Naive thymus-derived CD4-positive, alpha-beta T cell (primary cell): ENCODE measurements at regions of chr14 and their contacts with region 1.

Region 1: GRCh38 chr14:69460093-69460701 is 24.3 kb upstream of the PLEKHD1 start:
- DNase-seq: peak in 8 of 9 donors; percentile 29 to 51 (median 38)
- ATAC-seq: peak; percentile 94
- H3K4me3 ChIP-seq: no peak overlapping the region
- H3K4me3 Mint-ChIP-seq: no peak overlapping the region
- H3K27ac ChIP-seq: no peak overlapping the region
- H3K27ac Mint-ChIP-seq: peak overlapping the region in 1 of 9 donors; percentile 11
- H3K4me1 ChIP-seq: no peaks in the 10 kb centered on the region
- H3K4me1 Mint-ChIP-seq: no peaks in the 10 kb centered on the region
- H3K27me3 ChIP-seq: no peaks in the 10 kb centered on the region
- H3K27me3 Mint-ChIP-seq: no peaks in the 10 kb centered on the region

Region 2: DNA sequence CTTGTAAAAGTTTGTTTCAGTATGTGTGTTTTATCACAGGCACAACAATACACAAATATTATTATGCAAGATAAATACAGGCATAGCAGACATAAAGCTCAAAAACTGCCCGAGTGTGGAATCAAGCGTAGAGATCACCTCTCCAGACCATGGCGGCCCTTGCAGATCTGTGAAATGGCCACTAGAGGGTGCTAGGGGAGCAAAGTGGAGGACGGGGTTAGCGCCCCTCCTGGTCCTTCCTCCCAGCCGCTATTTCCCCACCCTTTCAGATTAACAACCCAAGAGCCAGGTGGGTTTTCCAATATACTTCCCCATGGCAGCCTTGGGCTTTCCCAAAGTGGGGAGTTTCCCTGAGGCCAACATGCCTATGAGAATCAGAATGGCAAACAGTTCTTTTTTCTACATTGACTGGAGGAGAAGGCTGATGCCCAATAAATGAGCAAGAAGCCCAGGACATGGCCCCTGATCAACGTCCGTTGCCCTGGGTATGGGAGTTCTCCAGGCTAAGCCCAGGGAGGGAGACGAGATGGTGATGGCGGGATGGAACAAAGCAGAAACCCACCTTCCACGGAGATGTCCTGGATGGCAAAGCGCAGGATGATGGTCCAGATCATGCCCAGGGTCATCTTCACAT is 548.5 kb before region 1 on chr14:
- CTCF ChIA-PET with region 1: no interaction called
- POLR2A ChIA-PET with region 1: no interaction called
- intact Hi-C with region 1: no loop called
- DNase-seq: peak; percentile 54 to 86 (median 80)
- ATAC-seq: peak; percentile 99
- H3K4me3 ChIP-seq: no peak overlapping the region
- H3K4me3 Mint-ChIP-seq: peak overlapping the region in 1 of 10 donors; percentile 37
- H3K27ac ChIP-seq: no peak overlapping the region
- H3K27ac Mint-ChIP-seq: peak overlapping the region; percentile 51 to 90 (median 82)
- H3K4me1 ChIP-seq: peaks cover 0 to 15% of the 10 kb centered on the region in 2 donors
- H3K4me1 Mint-ChIP-seq: peaks cover 13 to 57% (median 43%) of the 10 kb centered on the region in 7 donors
- H3K27me3 ChIP-seq: no peaks in the 10 kb centered on the region
- H3K27me3 Mint-ChIP-seq: no peaks in the 10 kb centered on the region

Region 3: DNA sequence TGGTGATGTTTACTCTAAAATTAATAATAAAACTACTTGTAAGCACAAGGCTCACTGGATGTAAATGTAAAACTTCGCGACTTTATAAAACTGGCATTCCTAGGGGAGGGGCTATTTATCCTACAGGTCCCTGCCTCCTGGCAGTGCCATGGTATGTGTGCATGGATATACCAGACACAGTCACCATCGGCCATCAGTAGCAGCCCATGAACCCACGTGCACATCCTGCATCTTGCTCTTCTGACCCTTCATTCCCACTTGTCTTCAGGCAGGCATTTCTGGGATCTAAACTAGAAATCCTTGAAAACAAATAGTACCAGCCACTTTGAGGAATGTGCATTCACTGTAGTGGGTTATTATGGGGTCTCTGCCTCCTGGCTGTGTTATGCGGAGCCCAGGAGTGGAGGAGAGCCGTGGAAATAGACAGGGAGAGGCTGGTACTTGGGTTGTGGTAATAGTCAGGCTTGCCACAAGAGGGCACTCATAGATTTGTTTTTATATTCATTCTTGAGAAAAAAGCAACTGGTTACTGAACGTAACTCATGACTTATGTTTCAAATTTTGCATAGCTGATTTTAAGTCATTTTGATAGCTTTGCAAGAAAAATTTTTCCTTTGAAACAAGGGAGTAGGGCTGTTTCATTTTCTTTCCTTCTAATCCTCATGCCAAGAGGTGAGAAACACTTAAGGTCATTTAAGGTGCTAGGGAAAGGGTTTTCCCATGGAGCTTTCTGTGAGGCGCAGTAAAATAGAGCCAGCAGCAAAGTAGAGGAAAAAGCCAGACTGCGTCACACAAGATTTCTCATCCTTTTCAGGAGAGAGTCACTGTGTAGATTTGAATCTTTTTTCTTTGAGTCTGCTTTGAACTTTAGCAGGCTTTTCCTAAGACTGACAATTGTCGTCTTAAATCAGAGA is 217.6 kb before region 1 on chr14:
- CTCF ChIA-PET with region 1: interaction called, 20 read pairs
- POLR2A ChIA-PET with region 1: no interaction called
- intact Hi-C with region 1: loop called (anchors 1 kb)
- DNase-seq: peak in 7 of 9 donors; percentile 23 to 61 (median 49)
- ATAC-seq: peak; percentile 78
- H3K4me3 ChIP-seq: no peak overlapping the region
- H3K4me3 Mint-ChIP-seq: no peak overlapping the region
- H3K27ac ChIP-seq: no peak overlapping the region
- H3K27ac Mint-ChIP-seq: peak overlapping the region in 1 of 9 donors; percentile 59
- H3K4me1 ChIP-seq: no peaks in the 10 kb centered on the region
- H3K4me1 Mint-ChIP-seq: peaks cover 0 to 4% (median 0%) of the 10 kb centered on the region in 7 donors
- H3K27me3 ChIP-seq: no peaks in the 10 kb centered on the region
- H3K27me3 Mint-ChIP-seq: no peaks in the 10 kb centered on the region

Region 4: GRCh38 chr14:69260861-69261564 is 199.2 kb before region 1 on chr14:
- CTCF ChIA-PET with region 1: no interaction called
- POLR2A ChIA-PET with region 1: no interaction called
- intact Hi-C with region 1: loop called in 1 of 2 experiments (anchors 1 kb)
- DNase-seq: peak in 5 of 9 donors; percentile 4 to 52 (median 12)
- ATAC-seq: peak; percentile 69
- H3K4me3 ChIP-seq: no peak overlapping the region
- H3K4me3 Mint-ChIP-seq: peak overlapping the region in 9 of 10 donors; percentile 21 to 85 (median 65)
- H3K27ac ChIP-seq: no peak overlapping the region
- H3K27ac Mint-ChIP-seq: no peak overlapping the region
- H3K4me1 ChIP-seq: no peaks in the 10 kb centered on the region
- H3K4me1 Mint-ChIP-seq: peaks cover 0 to 16% (median 5%) of the 10 kb centered on the region in 7 donors
- H3K27me3 ChIP-seq: peaks cover 0 to 10% of the 10 kb centered on the region in 2 donors
- H3K27me3 Mint-ChIP-seq: peaks cover 30 to 74% (median 51%) of the 10 kb centered on the region in 5 donors